ENCODE measurements at regions of chr11 and their contacts with region 1.

Region 1: DNA sequence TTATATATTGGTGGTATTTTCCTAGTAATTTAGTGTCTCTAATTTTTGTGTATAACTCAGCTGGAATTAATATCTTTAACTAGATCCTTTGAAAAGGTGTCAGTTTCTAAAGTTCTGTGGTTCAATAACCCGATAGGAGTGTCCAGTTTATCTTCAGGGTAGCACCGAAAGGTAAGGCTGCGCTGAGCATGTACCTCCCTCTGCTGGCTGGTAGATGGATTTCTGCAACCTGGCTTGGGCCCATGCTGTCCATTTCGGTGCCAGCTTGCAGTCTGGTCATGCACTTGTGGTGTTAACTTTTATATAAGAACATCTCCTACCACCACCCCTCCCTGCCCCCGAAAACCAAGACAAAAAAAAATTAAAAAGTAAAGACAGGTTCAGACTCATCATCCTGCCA is 24.7 kb downstream of the EXT2 start:
- DNase-seq: no peak
- ATAC-seq: no peak
- H3K4me3 Mint-ChIP-seq: no peak overlapping the region
- H3K27ac Mint-ChIP-seq: no peak overlapping the region
- H3K4me1 Mint-ChIP-seq: no peaks in the 10 kb centered on the region
- H3K27me3 Mint-ChIP-seq: no peaks in the 10 kb centered on the region

Region 2: DNA sequence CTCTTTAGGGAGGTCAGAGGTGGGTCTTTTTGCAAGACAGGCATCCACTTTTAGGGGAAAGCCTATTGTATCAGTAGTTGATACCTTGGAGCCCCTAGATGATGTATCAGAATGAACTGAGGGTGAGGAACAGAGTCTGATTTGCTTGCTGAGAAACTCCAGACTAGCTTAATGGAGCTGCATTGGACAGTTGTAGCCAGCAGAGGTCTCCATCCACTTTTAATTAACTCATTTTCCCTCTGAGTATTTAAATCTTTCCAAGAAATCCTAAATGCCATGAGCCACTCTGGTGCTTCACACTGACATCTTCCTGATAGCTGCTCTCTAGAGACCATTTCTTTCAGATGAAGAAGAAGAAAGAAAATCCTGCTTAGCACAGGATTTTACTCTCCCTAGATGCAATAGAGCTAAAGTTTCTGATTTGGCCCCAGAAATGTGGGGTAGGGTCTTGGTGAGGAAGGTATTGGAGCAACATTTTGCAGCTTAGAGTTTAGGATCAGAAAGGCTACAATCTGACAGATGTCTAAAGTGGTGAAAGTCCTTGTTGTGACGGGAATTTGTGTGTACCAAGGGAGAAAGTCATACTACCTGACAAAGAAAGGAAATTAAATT is 13.3 kb after region 1 on chr11:
- CTCF ChIA-PET with region 1: interaction called, 18 read pairs
- POLR2A ChIA-PET with region 1: no interaction called
- DNase-seq: no peak
- ATAC-seq: no peak
- H3K4me3 Mint-ChIP-seq: no peak overlapping the region
- H3K27ac Mint-ChIP-seq: no peak overlapping the region
- H3K4me1 Mint-ChIP-seq: no peaks in the 10 kb centered on the region
- H3K27me3 Mint-ChIP-seq: no peaks in the 10 kb centered on the region

Measured in activated CD8-positive, alpha-beta T cell treated with anti-CD3 and anti-CD28 coated beads, Interleukin-2, amount 10 ng/mL, durations not matched to agents 7 days and 5 days (primary cell).